GM10248 (cell line): ENCODE measurements at regions of chr1 and their contacts with region 1.

Region 1: GRCh38 chr1:219173758-219174588 is at the start of gene LYPLAL1:
- DNase-seq: peak; percentile 89
- CTCF ChIP-seq: no peak

Region 2: GRCh38 chr1:219189021-219189824 is 15.2 kb after region 1 on chr1:
- CTCF ChIA-PET with region 1: interaction called, 44 read pairs
- POLR2A ChIA-PET with region 1: interaction called, 4 read pairs
- DNase-seq: peak; percentile 28
- CTCF ChIP-seq: no peak